A549 (cell line): ENCODE measurements at regions of chr1 and their contacts with region 1.

Region 1: DNA sequence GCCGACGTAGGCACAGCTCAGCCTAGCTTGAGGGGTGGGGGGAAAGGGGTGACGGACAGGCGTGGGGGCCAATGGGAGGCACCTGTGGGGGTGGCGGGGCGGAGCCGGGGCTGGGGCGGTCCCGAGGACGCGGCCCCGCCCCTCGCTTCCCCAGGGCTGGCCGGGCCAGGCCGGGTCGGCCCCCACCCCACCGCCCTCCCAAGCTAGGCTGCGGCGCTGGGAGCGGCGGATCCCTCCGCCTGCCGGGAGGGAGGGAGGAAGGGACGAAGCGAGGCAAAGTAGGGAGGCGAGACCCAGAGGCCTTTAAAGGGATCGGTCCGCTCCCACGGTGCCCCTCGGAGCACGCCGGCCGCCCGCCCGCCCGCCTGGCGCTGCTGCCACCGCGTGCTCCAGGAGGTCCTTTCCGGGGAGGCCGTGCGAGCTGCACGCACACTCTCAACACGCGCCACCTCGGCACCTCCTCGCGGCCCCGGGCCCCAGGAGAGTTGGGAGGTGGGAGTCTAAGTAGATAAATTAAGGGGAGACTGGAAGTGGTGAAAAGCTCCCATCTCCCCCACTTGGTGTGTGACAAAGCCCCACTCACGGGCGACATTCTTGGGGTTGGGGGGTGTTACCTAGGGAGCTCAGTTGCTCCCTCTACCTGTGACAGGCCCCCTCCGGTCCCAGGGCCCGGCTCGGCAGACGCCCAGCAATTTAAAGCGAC is 373 bp upstream of the MEF2D start:
- DNase-seq: peak; percentile 91 to 98
- ATAC-seq: peak; percentile 58 to 70
- H3K4me3 ChIP-seq: peak overlapping the region; percentile 98
- H3K27ac ChIP-seq: peak overlapping the region; percentile 98 to 100
- H3K4me1 ChIP-seq: peaks cover 70% of the 10 kb centered on the region
- CTCF ChIP-seq: peak; percentile 55
- EP300 ChIP-seq: peak in 1 of 2 experiments; percentile 32; a peak in 1 of 5 replicates
- POLR2A ChIP-seq: peak; percentile 57
- RAD21 ChIP-seq: peak in 1 of 2 experiments; percentile 31; a peak in 2 of 5 replicates

Region 2: DNA sequence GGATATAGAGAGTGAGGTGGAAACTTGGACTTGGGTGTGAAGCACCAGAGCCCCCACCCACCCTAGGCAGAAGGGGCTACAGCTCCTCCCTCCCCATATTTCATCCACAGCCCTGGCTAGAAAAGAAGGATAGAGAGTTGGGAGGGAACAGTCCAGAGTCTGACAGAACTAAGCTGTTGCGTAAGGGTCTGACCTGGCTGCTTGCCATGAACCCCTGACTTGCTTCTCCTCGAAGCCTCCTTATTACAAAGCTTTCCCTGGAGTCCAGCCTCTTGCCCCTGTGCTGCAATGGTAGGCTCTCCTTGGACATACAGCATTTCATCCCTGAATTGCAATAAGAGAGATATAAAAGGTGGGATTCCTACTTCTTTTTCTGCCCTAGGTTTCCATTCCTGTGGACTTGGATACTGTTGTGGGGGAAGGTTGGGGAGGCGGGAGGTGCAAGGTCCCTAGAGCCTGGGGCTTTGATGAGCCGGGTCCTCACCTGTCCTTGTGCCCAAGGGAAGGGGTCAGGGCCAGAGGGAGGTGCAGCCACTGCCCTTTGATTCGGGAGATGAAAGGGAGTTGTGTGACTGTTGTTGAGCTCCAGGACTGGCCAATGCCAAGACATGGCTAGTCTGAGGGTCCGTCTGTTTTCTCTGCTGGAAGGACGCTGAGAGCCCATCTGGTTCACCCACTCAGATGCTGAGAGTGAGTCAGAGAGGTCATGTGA is 129.2 kb before region 1 on chr1:
- CTCF ChIA-PET with region 1: no interaction called
- POLR2A ChIA-PET with region 1: no interaction called
- DNase-seq: no peak
- ATAC-seq: 0 out of 6 replicates have a peak, but pooled peaks of 1 of the 2 experiments have one; percentile 4
- H3K4me3 ChIP-seq: no peak overlapping the region
- H3K27ac ChIP-seq: peak overlapping the region in 1 of 2 experiments; percentile 30; a peak in 1 of 6 replicates
- H3K4me1 ChIP-seq: peaks cover 38% of the 10 kb centered on the region
- CTCF ChIP-seq: no peak
- EP300 ChIP-seq: no peak
- POLR2A ChIP-seq: no peak
- RAD21 ChIP-seq: no peak

Region 3: GRCh38 chr1:156407344-156407743 is 93.6 kb before region 1 on chr1:
- CTCF ChIA-PET with region 1: no interaction called
- POLR2A ChIA-PET with region 1: no interaction called
- DNase-seq: no peak
- ATAC-seq: peak in 1 of 2 experiments; percentile 13; a peak in 1 of 6 replicates
- H3K4me3 ChIP-seq: no peak overlapping the region
- H3K27ac ChIP-seq: no peak overlapping the region
- H3K4me1 ChIP-seq: no peaks in the 10 kb centered on the region
- CTCF ChIP-seq: no peak
- EP300 ChIP-seq: no peak
- POLR2A ChIP-seq: no peak
- RAD21 ChIP-seq: no peak

Region 4: DNA sequence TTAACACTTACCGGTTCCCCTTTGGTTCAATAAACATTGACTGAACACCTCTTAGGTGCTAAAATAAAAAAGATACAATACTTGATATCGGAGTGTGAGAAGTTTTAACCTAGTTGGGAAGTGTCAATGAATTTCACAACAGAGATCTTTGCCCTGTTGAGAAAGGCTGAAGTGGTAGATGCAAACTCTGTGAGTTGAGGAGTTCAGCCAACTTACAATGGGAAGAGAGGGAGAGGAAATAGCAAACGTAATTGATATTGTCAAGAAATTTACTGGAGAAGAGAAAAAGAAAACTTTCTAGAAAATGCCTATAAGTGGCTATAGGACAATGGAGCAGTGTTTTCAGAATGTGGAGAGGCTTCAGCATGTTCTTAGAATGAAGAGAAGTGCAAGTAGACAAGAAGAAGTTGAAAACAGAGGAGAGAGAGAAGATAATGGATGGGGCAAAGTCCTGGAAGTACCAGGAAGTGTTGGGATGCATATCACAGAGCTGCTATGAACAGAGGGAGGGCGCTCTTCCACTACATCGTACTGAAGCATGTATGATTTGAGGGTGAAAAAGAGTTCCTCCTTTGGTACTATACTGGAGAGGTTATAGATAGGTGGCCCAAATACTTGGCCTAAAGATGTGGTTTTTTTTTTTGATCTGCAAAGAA is 49.3 kb before region 1 on chr1:
- CTCF ChIA-PET with region 1: interaction called, 55 read pairs
- POLR2A ChIA-PET with region 1: interaction called, 130 read pairs
- DNase-seq: peak in 1 of 2 experiments; percentile 33
- ATAC-seq: no peak
- H3K4me3 ChIP-seq: no peak overlapping the region
- H3K27ac ChIP-seq: no peak overlapping the region
- H3K4me1 ChIP-seq: peaks cover 4% of the 10 kb centered on the region; the same call in 1 of the 3 replicates
- CTCF ChIP-seq: no peak
- EP300 ChIP-seq: no peak
- POLR2A ChIP-seq: no peak
- RAD21 ChIP-seq: no peak

Region 5: GRCh38 chr1:156480411-156481192 is 20.3 kb before region 1 on chr1:
- CTCF ChIA-PET with region 1: interaction called, 474 read pairs
- POLR2A ChIA-PET with region 1: interaction called, 14 read pairs
- DNase-seq: peak; percentile 59 to 83
- ATAC-seq: peak; percentile 36 to 78; a peak in 3 of 6 replicates
- H3K4me3 ChIP-seq: no peak overlapping the region
- H3K27ac ChIP-seq: peak overlapping the region in 1 of 2 experiments; percentile 42; a peak in 2 of 6 replicates
- H3K4me1 ChIP-seq: peaks cover 29% of the 10 kb centered on the region
- CTCF ChIP-seq: peak; percentile 64
- EP300 ChIP-seq: no peak
- POLR2A ChIP-seq: no peak
- RAD21 ChIP-seq: peak; percentile 53 to 57

Region 6: DNA sequence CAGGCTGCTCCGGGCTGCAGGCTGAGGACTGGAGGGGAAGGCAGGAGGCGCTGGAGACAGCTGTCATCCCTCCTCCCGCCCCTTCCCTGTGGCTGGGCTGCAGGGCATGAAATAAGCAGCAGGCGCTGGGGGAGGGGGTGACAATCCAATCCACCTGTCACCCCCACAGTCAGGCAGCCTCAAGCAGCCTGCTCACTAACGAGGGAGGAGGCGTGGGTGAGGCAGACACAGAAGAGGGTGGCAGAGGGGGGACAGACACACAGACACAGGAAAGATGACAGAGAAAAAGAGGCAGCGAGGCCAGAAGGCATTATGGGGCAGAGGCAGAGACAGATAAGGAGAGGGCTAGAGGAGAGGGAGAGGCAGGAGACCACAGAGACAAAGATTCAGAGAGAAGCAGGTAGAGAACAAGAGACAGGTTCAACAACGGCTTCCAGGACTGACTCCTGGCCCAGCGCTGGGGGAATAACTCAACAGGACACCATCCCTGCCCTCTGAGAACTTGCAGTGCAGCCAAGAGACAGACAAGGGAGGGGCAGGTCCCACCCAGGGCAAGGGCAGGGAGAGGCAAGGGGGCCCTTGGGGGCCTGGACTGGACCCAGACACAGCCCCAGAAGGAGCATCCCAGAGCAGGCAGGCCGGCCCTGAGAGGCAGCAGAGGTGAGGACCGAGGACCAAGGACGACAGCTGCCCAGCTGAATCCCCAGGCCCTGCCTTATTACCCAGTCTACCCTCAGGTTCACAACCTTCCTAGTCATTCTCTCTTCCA is 11.6 kb before region 1 on chr1:
- CTCF ChIA-PET with region 1: interaction called, 474 read pairs
- POLR2A ChIA-PET with region 1: interaction called, 9 read pairs
- DNase-seq: no peak
- ATAC-seq: peak; percentile 3 to 31; a peak in 3 of 6 replicates
- H3K4me3 ChIP-seq: no peak overlapping the region
- H3K27ac ChIP-seq: peak overlapping the region; percentile 48 to 75; a peak in 3 of 6 replicates
- H3K4me1 ChIP-seq: peaks cover 64% of the 10 kb centered on the region
- CTCF ChIP-seq: no peak
- EP300 ChIP-seq: no peak
- POLR2A ChIP-seq: no peak
- RAD21 ChIP-seq: no peak

Region 7: DNA sequence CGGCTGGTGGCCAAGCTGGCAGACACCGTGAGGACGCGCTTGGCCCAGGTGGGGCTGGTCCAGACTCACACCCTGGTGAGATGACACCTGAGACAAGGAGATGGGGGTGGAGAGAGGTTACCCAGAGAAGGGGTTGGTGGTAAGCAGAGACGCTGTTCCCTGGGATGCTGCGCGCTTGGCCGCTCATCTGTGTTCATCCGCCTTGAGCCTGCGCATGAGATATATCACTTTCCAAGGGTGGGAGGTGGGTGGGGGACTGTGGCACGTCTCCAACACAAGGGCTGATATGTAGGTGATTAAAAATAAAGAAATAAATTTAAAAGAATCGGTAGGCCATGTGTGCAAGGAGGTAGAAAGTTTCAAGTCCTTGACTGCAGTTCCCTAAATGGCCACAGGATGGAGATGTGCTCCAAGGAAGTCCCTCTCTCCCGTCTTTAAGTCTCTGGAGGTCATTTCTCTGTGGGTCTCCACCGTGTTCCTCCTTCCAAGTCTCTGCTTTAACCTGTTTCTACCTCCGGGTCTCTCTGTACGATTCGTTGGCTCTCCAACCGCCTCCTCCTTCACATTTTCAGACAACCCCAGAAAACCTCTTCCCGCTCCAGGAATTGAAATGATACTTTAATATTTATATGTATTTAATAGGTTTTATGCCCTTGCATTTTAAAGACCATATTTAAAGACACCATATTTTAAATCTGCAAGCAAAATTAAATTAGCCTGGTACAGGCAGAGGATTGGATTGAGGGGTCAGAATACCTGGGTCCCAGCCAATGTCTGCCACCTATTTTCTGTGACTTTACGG is 83.1 kb after region 1 on chr1:
- CTCF ChIA-PET with region 1: interaction called, 13 read pairs
- POLR2A ChIA-PET with region 1: interaction called, 5 read pairs
- DNase-seq: peak; percentile 85 to 88
- ATAC-seq: peak; percentile 67 to 80
- H3K4me3 ChIP-seq: no peak overlapping the region
- H3K27ac ChIP-seq: peak overlapping the region in 1 of 2 experiments; percentile 60; a peak in 3 of 6 replicates
- H3K4me1 ChIP-seq: 0 out of 3 replicates have a peak, but pooled peaks cover 4% of the 10 kb centered on the region
- CTCF ChIP-seq: peak; percentile 82
- EP300 ChIP-seq: no peak
- POLR2A ChIP-seq: no peak
- RAD21 ChIP-seq: peak; percentile 78 to 85

Region 8: DNA sequence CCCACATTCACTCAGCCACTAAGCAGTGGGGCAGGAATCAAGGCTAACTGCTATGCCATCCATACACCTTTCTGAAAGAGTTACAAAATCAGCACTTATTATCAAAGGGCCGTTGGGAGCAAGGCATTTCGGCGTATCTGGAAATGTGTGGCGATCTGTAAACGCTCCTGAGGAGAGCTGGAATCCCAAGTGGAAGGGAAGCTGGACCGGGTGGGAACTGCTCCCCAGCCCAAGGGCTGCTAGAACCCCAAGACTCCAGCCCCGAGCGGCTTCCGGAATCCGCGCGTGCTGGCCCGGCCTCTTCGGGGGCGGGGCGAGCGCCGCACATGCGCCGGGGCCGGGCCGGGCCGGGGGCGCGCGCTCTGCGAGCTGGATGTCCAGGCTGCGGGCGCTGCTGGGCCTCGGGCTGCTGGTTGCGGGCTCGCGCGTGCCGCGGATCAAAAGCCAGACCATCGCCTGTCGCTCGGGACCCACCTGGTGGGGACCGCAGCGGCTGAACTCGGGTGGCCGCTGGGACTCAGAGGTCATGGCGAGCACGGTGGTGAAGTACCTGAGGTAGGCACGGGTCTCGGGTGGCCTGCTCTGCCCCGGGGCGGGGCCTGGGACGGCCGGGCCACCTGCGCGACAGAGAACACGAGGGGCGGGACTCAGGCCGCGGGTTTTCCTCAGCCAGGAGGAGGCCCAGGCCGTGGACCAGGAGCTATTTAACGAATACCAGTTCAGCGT is 90.6 kb after region 1 on chr1 and contains the start of gene NAXE:
- CTCF ChIA-PET with region 1: interaction called, 13 read pairs
- POLR2A ChIA-PET with region 1: interaction called, 16 read pairs
- DNase-seq: peak; percentile 57 to 79
- ATAC-seq: peak; percentile 76 to 89
- H3K4me3 ChIP-seq: peak within 1 kb of the TSS; percentile 72
- H3K27ac ChIP-seq: peak within 1 kb of the TSS; percentile 94 to 98
- H3K4me1 ChIP-seq: peaks cover 10% of the 10 kb centered on the region; the same call in 2 of the 3 replicates
- CTCF ChIP-seq: no peak
- EP300 ChIP-seq: no peak
- POLR2A ChIP-seq: peak; percentile 91
- RAD21 ChIP-seq: no peak
- polyA plus RNA-seq, gene NAXE: 81.4 and 109 TPM in 2 replicates